ENCODE measurements at regions of chr13 and their contacts with region 1.

Region 1: GRCh38 chr13:44435142-44435982 is 61.7 kb downstream of the SERP2 start:
- DNase-seq: peak; percentile 70
- H3K4me3 Mint-ChIP-seq: peak overlapping the region; percentile 83
- H3K27ac Mint-ChIP-seq: peak overlapping the region; percentile 72
- H3K4me1 Mint-ChIP-seq: peaks cover 17% of the 10 kb centered on the region
- H3K27me3 Mint-ChIP-seq: peaks cover 47% of the 10 kb centered on the region

Region 2: GRCh38 chr13:44191504-44192171 is 243.7 kb before region 1 on chr13:
- intact Hi-C with region 1: loop called (anchors 1 kb)
- DNase-seq: peak; percentile 17
- H3K4me3 Mint-ChIP-seq: no peak overlapping the region
- H3K27ac Mint-ChIP-seq: no peak overlapping the region
- H3K4me1 Mint-ChIP-seq: peaks cover 35% of the 10 kb centered on the region
- H3K27me3 Mint-ChIP-seq: peaks cover 51% of the 10 kb centered on the region

Region 3: DNA sequence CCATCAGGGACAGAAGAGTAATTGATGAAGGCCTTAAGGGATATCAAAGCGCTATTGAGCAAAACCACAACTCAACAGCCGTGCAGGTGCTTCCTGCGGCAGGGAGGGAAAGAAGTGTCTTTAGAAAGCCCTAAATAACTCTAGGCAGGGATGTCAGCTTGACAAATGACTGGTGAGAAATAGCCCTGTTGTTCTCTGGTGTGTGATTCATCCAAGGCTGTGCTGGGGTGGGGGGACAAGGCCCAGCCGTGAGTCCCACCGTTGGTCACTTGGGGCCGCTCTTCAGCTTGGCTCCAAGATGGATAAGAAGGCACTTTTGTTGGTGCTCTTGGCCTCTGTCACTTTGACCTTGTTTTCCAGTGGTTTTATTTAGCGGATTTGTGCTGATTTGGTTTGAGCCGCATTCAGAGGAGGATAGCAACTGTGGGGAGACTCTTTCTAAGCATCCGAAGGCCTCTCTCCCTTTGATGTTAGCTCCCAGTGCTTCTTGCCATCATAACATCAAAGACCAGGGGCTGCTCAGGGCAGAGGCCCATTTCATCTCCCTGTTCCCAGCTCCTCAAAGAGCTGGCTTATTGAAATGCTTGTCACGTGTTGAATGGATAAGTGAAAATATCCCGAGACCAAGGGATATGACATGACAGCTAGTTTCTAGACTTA is 192.0 kb before region 1 on chr13:
- intact Hi-C with region 1: loop called (anchors 1 kb)
- DNase-seq: no peak
- H3K4me3 Mint-ChIP-seq: no peak overlapping the region
- H3K27ac Mint-ChIP-seq: no peak overlapping the region
- H3K4me1 Mint-ChIP-seq: peaks cover 8% of the 10 kb centered on the region
- H3K27me3 Mint-ChIP-seq: peaks cover 22% of the 10 kb centered on the region

Region 4: DNA sequence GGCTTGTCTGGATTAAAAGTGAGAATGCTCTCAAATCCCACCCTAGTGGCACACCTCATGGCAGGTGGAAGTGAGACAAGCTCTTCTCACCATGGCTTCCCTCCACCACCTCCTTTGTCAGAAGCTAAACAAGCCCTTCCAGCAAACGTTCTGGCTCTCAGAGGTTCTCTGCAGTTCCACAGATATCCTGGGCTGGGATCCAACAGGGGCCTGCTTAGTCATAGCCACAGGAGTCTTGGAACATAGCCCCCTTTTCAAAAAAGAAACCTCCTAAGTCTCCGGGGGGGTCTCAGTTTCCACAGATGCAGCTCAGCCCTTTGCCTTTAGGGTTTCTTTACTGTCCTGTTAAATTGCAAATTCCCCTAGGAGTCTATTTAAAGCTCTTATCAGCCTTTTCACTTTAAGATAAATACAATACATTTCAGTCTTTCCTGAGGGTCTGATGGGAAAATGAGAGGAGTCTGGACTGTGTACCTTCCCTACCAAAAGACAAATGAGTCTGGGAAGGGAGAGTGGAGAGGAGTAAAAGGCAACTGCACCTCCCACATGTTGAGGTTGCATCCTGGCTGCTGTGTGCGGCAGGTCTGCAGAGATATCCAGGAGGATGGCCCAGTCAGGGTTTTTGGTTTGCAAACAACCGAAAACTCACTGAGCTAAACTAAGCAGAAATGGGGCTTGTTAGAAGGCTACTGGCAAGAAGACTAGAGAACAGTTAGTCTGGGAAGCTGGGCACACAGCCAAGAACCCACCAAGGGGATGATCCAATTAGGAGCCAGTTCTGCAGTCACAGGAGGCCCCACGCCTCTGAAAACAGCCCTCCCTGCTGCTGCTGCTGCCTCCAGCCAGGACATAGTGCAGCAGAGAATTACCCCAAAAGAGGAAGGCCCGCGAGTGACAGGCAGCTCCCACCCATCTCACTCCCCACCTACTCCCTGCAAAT is 103.2 kb before region 1 on chr13:
- intact Hi-C with region 1: no loop called
- DNase-seq: no peak
- H3K4me3 Mint-ChIP-seq: no peak overlapping the region
- H3K27ac Mint-ChIP-seq: peak overlapping the region; percentile 9
- H3K4me1 Mint-ChIP-seq: peaks cover 7% of the 10 kb centered on the region
- H3K27me3 Mint-ChIP-seq: peaks cover 1% of the 10 kb centered on the region